Left colon (tissue), 2 donors: ENCODE measurements at regions of chr6 and their contacts with region 1.

Region 1: DNA sequence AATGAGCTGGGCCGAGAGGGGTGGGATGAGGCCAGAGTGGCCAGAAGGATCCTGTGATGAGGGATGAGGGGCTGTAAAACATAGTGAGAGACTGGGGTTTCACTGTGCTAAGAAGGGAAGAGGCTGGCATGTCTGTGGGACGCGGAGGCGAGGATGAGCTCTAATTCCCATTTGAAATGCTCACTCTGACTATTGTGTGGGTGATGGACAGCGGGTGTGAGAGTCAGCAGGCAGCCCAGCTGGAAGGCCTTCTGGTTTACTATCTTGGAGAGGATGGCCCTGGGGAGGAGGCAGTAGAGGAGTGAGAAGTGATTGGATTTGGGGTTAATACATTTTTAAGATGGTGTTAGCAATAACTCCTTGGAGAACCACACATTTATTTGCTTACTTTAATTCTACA is 9.5 kb upstream of the MICA start:
- DNase-seq: no peak
- ATAC-seq: no peak

Region 2: GRCh38 chr6:31441365-31442267 is 47.7 kb after region 1 on chr6:
- intact Hi-C with region 1: loop called in 1 of 2 experiments (anchors 5 kb)
- DNase-seq: peak; percentile 67 to 90
- ATAC-seq: peak; percentile 92